Caco-2 (cell line): ENCODE measurements at regions of chr10 and their contacts with region 1.

Region 1: DNA sequence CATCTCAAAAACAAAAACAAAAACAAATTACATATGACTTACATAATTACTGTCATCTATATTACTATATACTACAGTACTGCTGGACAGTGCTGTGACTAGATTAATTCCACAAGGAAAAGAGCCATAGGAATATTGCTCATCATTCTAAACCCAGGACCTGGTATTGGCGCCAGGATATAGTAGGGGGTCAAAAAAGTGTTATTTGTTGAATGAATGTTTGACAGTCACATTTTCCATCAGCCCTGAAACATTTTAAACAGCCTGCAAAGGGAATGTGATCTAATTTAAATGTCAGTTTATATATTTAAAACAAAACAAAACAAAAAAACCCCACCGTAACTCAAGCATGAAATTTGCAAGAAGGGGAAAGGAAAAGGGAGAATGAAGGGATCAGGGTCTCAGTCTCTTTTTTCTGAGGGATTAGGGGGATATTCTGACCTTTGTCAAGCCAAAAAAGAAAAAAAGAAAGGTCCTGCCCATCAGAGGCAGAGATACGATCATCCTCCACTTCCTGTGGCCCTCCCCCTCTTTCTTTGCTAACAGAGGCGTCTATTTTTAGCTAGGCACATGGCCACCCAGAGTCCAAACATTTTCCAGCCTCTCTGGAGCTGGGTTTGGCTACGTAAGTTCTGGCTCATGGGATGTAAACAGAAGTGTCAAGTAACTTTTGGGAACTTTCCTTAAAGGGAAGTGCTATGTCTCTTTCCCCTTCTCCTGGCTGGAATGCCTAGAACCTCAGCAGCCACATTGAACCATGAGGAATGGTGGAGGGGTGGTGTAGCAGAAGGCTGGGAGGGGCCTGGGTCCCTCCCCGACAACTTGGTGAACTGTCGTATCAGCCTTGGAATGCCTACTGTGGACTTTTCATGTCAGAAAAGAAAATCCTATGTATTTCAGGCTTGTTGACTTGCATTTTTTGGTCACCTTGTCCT is 44.6 kb upstream of the DLG5 start:
- DNase-seq: peak in 1 of 2 experiments; percentile 3
- H3K4me3 ChIP-seq: no peak overlapping the region
- H3K4me3 Mint-ChIP-seq: no peak overlapping the region
- H3K27ac Mint-ChIP-seq: no peak overlapping the region
- H3K4me1 ChIP-seq: peaks cover 6% of the 10 kb centered on the region; the same call in 1 of the 2 replicates
- H3K4me1 Mint-ChIP-seq: no peaks in the 10 kb centered on the region
- H3K27me3 ChIP-seq: no peaks in the 10 kb centered on the region
- H3K27me3 Mint-ChIP-seq: no peaks in the 10 kb centered on the region
- CTCF ChIP-seq: no peak

Region 2: GRCh38 chr10:78029269-78030226 is 58.4 kb after region 1 on chr10 and contains the start of gene POLR3A:
- CTCF ChIA-PET with region 1: interaction called, 11 read pairs
- POLR2A ChIA-PET with region 1: no interaction called
- intact Hi-C with region 1: no loop called
- DNase-seq: peak; percentile 95 to 98
- H3K4me3 ChIP-seq: peak within 1 kb of the TSS; percentile 75
- H3K4me3 Mint-ChIP-seq: peak within 1 kb of the TSS; percentile 93
- H3K27ac Mint-ChIP-seq: peak within 1 kb of the TSS; percentile 89
- H3K4me1 ChIP-seq: no peaks in the 10 kb centered on the region; the same call in 1 of the 2 replicates
- H3K4me1 Mint-ChIP-seq: peaks cover 5% of the 10 kb centered on the region
- H3K27me3 ChIP-seq: no peaks in the 10 kb centered on the region
- H3K27me3 Mint-ChIP-seq: no peaks in the 10 kb centered on the region
- CTCF ChIP-seq: peak; percentile 78 to 79
- total RNA-seq, gene POLR3A: 25.5 and 29.1 TPM in 2 replicates